Activated naive CD4-positive, alpha-beta T cell treated with anti-CD3 and anti-CD28 coated beads for 36 hours (primary cell): ENCODE measurements at regions of chr3 and their contacts with region 1.

Region 1: GRCh38 chr3:150546226-150547044 is at the starts of genes EIF2A and SERP1:
- DNase-seq: peak; percentile 99
- H3K4me3 Mint-ChIP-seq: peak within 1 kb of the TSS; percentile 97
- H3K27ac Mint-ChIP-seq: peak within 1 kb of the TSS; percentile 95
- H3K4me1 Mint-ChIP-seq: peaks cover 69% of the 10 kb centered on the region
- H3K27me3 Mint-ChIP-seq: no peaks in the 10 kb centered on the region
- total RNA-seq, gene EIF2A: 133 to 135 TPM
- total RNA-seq, gene SERP1: 95.9 to 105 TPM

Region 2: DNA sequence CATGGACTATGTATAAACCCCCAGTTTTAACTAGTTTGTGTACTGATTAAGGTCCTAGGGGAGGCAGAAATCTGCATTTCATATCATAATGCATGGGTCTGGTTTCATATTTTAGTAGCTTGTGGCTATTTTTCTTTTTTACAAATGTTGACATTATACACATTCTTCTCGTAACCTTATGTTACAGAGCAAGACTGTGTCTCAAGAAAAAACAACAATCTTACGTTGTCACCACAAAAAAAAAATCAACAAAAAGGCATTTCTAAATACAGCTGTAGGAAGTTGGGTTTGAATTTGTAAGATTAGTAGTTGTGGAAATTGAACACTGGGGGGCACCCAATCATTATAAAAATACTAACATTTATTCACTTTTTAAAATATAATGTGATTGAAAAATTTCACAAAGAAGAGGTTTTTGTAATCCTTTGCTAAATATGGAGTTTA is 18.1 kb before region 1 on chr3:
- CTCF ChIA-PET with region 1: interaction called, 4 read pairs
- intact Hi-C with region 1: loop called (anchors 2 kb)
- DNase-seq: no peak
- H3K4me3 Mint-ChIP-seq: no peak overlapping the region
- H3K27ac Mint-ChIP-seq: no peak overlapping the region
- H3K4me1 Mint-ChIP-seq: peaks cover 8% of the 10 kb centered on the region
- H3K27me3 Mint-ChIP-seq: no peaks in the 10 kb centered on the region

Region 3: GRCh38 chr3:150557725-150558124 is 11.3 kb after region 1 on chr3:
- CTCF ChIA-PET with region 1: no interaction called
- intact Hi-C with region 1: no loop called
- DNase-seq: no peak
- H3K4me3 Mint-ChIP-seq: no peak overlapping the region
- H3K27ac Mint-ChIP-seq: no peak overlapping the region
- H3K4me1 Mint-ChIP-seq: peaks cover 33% of the 10 kb centered on the region
- H3K27me3 Mint-ChIP-seq: no peaks in the 10 kb centered on the region

Region 4: DNA sequence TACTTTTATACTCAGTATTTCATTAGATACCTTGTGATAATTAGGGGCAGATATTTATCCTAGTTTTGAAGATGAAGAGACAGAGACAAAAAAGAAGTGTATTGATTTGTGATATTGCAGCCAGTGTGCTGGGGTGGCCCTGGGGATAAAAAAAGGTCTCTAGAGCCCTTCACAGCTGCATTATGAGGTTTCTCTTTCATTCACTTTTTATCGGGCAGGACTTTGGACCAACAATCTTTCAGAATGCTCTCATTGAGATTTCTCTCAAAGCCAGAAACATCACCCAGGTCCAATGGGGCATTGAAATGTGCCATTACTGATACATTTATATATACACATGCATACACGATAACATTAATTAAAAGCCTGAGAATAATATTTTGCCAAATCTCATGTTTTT is 36.2 kb after region 1 on chr3:
- CTCF ChIA-PET with region 1: no interaction called
- intact Hi-C with region 1: loop called (anchors 1 kb)
- DNase-seq: no peak
- H3K4me3 Mint-ChIP-seq: no peak overlapping the region
- H3K27ac Mint-ChIP-seq: peak overlapping the region; percentile 81
- H3K4me1 Mint-ChIP-seq: peaks cover 8% of the 10 kb centered on the region
- H3K27me3 Mint-ChIP-seq: no peaks in the 10 kb centered on the region

Region 5: GRCh38 chr3:150703299-150704134 is 157.1 kb after region 1 on chr3 and contains the start of gene ERICH6:
- CTCF ChIA-PET with region 1: interaction called, 6 read pairs
- intact Hi-C with region 1: loop called (anchors 1 kb)
- DNase-seq: peak; percentile 88
- H3K4me3 Mint-ChIP-seq: peak within 1 kb of the TSS; percentile 96
- H3K27ac Mint-ChIP-seq: no peak within 1 kb of the TSS
- H3K4me1 Mint-ChIP-seq: peaks cover 25% of the 10 kb centered on the region
- H3K27me3 Mint-ChIP-seq: no peaks in the 10 kb centered on the region
- total RNA-seq, gene ERICH6: not detected